ENCODE measurements at regions of chr10 and their contacts with region 1.

Region 1: DNA sequence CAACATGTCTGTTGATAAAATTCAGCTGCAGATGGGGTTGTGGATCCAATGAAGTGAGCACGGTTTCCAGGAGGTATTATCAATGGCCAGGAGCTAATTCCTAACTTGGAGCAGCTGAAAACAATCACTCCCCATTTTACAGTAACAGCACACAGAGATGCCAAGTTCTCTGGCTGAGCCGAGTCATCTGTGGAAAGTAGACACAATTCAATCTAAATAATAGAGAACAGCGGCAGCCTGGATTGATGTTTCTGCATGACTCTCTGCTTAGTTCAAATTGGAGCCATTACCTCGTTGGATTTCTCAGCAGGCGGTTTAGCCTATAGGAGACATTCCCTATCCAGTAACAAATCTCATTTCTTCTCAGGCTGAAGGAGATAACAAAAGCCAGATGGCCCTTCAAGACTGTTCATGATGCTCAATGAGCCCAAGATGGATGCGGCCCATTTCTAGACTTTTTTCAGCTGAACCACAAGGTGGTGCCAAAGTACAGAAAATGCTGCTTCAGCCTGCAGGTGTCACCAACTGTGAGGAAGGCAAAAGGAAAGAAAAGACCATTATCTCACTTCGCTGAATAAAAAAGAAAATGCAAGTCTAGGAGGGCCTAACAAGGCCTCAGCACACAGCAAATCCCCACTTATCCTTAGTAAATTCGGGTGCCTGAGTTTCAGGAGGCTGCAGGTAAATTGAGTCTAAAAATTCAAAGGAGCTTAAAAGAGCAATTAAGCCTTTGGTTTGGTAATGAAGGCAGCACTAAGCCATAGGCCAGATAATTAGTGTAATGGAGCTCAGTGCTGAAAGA is 83.7 kb downstream of the SLC16A9 start:
- DNase-seq: peak; percentile 94
- H3K4me3 ChIP-seq: no peak overlapping the region
- H3K27ac ChIP-seq: no peak overlapping the region
- H3K4me1 ChIP-seq: no peaks in the 10 kb centered on the region
- H3K27me3 ChIP-seq: no peaks in the 10 kb centered on the region
- CTCF ChIP-seq: peak; percentile 93

Region 2: DNA sequence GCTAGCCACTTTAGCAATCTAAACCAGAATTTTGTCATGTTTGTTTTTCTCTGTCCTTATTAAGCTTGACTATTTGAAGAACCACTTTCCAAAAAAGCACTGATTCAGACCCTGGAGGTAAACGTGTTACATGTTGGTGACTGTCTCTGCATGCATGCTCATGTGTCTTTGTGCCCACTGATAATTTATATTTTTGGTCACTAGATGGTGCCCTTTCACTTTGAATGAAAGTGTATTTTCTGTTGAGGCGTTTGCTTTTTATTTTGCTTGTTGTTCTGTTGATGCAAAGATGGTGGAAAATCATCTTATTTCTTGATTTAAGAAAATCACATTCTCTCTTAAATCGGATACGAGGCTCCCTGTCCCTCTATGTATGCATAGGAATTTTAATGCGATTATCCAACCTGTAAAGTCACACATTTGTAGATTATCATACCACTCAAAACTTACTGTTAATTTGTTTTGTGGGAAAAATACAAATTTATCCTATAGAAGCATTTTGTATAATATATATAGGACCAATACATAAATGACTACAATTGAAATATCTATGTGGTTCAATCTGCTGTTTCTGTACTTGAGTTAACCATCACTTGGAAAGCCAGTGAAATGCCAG is 843.9 kb before region 1 on chr10:
- CTCF ChIA-PET with region 1: no interaction called
- POLR2A ChIA-PET with region 1: no interaction called
- intact Hi-C with region 1: loop called (anchors 2 kb)
- DNase-seq: peak; percentile 63
- H3K4me3 ChIP-seq: no peak overlapping the region
- H3K27ac ChIP-seq: no peak overlapping the region
- H3K4me1 ChIP-seq: no peaks in the 10 kb centered on the region
- H3K27me3 ChIP-seq: no peaks in the 10 kb centered on the region
- CTCF ChIP-seq: peak; percentile 67

Region 3: DNA sequence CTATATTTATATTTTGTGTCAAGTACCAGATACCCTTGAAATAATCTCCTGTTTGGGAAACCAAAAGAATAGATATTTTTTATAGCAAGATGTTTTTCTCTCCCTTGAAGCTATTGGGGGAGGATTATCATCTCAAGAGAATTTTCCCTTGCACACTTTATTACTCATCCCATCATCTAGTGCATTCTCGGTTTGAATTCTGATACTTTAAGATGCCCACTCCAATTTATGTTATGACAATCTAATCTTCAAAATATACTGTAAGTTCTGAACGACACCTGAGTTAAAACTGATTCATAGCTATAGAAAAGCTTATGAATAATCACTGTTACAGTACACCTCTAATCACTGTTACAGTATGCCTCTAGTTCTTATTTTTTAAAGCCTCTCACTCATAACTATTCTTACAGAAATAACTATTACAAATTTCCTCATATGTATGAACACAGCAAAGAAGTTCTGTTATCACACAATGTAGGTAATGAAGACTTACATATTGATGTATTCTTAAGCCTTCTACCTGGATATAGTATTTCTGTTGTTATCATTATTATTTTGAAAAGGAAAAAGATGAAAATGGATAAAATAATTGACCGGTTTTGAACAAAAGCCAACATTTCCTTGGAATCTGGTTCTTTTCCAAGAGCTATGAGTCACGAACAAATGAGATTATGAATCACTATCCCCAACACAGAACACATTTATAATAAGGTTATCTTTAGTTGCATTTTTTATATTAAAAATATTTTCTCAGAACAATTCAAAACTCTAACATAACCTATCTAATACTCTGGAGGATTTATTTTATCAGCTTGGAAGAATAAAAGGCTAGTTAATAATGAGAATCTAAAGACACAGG is 191.2 kb before region 1 on chr10:
- CTCF ChIA-PET with region 1: no interaction called
- POLR2A ChIA-PET with region 1: no interaction called
- intact Hi-C with region 1: loop called (anchors 5 kb)
- DNase-seq: peak; percentile 49
- H3K4me3 ChIP-seq: no peak overlapping the region
- H3K27ac ChIP-seq: peak overlapping the region; percentile 73
- H3K4me1 ChIP-seq: peaks cover 56% of the 10 kb centered on the region
- H3K27me3 ChIP-seq: no peaks in the 10 kb centered on the region
- CTCF ChIP-seq: no peak

Region 4: GRCh38 chr10:59750155-59750945 is 124.4 kb after region 1 on chr10:
- CTCF ChIA-PET with region 1: no interaction called
- POLR2A ChIA-PET with region 1: no interaction called
- intact Hi-C with region 1: loop called (anchors 5 kb)
- DNase-seq: no peak
- H3K4me3 ChIP-seq: no peak overlapping the region
- H3K27ac ChIP-seq: no peak overlapping the region
- H3K4me1 ChIP-seq: no peaks in the 10 kb centered on the region
- H3K27me3 ChIP-seq: no peaks in the 10 kb centered on the region
- CTCF ChIP-seq: no peak

Region 5: GRCh38 chr10:59906417-59907202 is 280.7 kb after region 1 on chr10 and contains the start of gene CCDC6:
- CTCF ChIA-PET with region 1: interaction called, 4 read pairs
- POLR2A ChIA-PET with region 1: no interaction called
- intact Hi-C with region 1: loop called (anchors 5 kb)
- DNase-seq: peak; percentile 96
- H3K4me3 ChIP-seq: peak within 1 kb of the TSS; percentile 97
- H3K27ac ChIP-seq: peak within 1 kb of the TSS; percentile 85
- H3K4me1 ChIP-seq: peaks cover 17% of the 10 kb centered on the region
- H3K27me3 ChIP-seq: no peaks in the 10 kb centered on the region
- CTCF ChIP-seq: peak; percentile 76
- total RNA-seq, gene CCDC6: 28.1 and 28.8 TPM in 2 replicates

Region 6: GRCh38 chr10:60444494-60445064 is 818.7 kb after region 1 on chr10:
- CTCF ChIA-PET with region 1: no interaction called
- POLR2A ChIA-PET with region 1: no interaction called
- intact Hi-C with region 1: loop called (anchors 5 kb)
- DNase-seq: peak; percentile 68
- H3K4me3 ChIP-seq: no peak overlapping the region
- H3K27ac ChIP-seq: no peak overlapping the region
- H3K4me1 ChIP-seq: peaks cover 25% of the 10 kb centered on the region
- H3K27me3 ChIP-seq: no peaks in the 10 kb centered on the region
- CTCF ChIP-seq: peak; percentile 79

Region 7: DNA sequence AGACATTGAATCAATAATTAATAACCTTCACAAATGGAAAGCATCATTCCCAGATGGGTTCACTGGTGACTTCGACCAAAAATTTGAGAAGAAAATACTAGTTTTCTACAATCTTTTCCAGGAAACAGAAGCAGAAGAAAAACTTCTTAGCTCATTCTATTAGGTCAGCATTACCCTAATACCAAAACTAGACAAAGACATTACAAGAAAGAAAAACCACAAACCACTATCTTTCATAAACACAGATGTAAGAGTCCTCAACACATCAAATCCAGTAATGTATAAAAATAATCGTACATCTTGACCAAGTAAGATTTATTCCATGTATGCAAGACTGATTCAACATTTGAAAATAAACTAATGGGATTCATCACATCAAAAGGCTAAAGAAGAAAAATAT is 1088.3 kb after region 1 on chr10:
- CTCF ChIA-PET with region 1: no interaction called
- POLR2A ChIA-PET with region 1: no interaction called
- intact Hi-C with region 1: no loop called
- DNase-seq: no peak
- H3K4me3 ChIP-seq: no peak overlapping the region
- H3K27ac ChIP-seq: no peak overlapping the region
- H3K4me1 ChIP-seq: peaks cover 8% of the 10 kb centered on the region
- H3K27me3 ChIP-seq: no peaks in the 10 kb centered on the region
- CTCF ChIP-seq: no peak

Measured in A673 (cell line).